Tibial artery (tissue), 4 donors: ENCODE measurements at regions of chr17 and their contacts with region 1.

Region 1: GRCh38 chr17:7627250-7628121 is at the start of gene SAT2:
- DNase-seq: peak; percentile 96 to 98
- H3K4me3 ChIP-seq: peak within 1 kb of the TSS; percentile 67 to 69
- H3K27ac ChIP-seq: peak within 1 kb of the TSS; percentile 85 to 92
- H3K4me1 ChIP-seq: peaks cover 0 to 18% (median 9%) of the 10 kb centered on the region in 4 donors
- H3K27me3 ChIP-seq: no peaks in the 10 kb centered on the region
- CTCF ChIP-seq: no peak

Region 2: DNA sequence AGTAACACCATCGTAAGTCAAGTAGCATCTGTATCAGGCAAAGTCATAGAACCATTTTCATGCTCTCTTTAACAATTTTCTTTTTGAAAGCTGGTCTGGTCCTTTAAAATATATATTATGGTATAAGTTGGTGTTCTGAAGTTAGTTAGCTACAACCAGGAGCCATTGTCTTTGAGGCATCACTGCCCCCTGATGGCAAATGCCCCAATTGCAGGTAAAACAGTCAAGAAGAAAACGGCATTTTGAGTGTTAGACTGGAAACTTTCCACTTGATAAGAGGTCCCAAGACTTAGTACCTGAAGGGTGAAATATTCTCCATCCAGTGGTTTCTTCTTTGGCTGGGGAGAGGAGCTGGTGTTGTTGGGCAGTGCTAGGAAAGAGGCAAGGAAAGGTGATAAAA is 45.8 kb after region 1 on chr17:
- intact Hi-C with region 1: no loop called
- DNase-seq: no peak
- H3K4me3 ChIP-seq: no peak overlapping the region
- H3K27ac ChIP-seq: no peak overlapping the region
- H3K4me1 ChIP-seq: no peaks in the 10 kb centered on the region
- H3K27me3 ChIP-seq: no peaks in the 10 kb centered on the region
- CTCF ChIP-seq: no peak

Region 3: GRCh38 chr17:7687908-7688807 is 60.7 kb after region 1 on chr17 and contains the start of gene WRAP53:
- intact Hi-C with region 1: loop called (anchors 5 kb)
- DNase-seq: peak; percentile 99
- H3K4me3 ChIP-seq: peak within 1 kb of the TSS; percentile 82 to 87
- H3K27ac ChIP-seq: peak within 1 kb of the TSS; percentile 93 to 94
- H3K4me1 ChIP-seq: peaks cover 0 to 33% (median 21%) of the 10 kb centered on the region in 4 donors
- H3K27me3 ChIP-seq: no peaks in the 10 kb centered on the region
- CTCF ChIP-seq: peak; percentile 97 to 99